Tibial artery (tissue), 4 donors: ENCODE measurements at regions of chr4 and their contacts with region 1.

Region 1: GRCh38 chr4:4985844-4986243 is 33.4 kb downstream of the CYTL1 start:
- DNase-seq: no peak
- H3K4me3 ChIP-seq: no peak overlapping the region
- H3K27ac ChIP-seq: no peak overlapping the region
- H3K4me1 ChIP-seq: peaks cover 0 to 6% (median 3%) of the 10 kb centered on the region in 4 donors
- H3K27me3 ChIP-seq: no peaks in the 10 kb centered on the region
- CTCF ChIP-seq: no peak

Region 2: GRCh38 chr4:4836044-4836566 is 149.7 kb before region 1 on chr4:
- intact Hi-C with region 1: no loop called
- DNase-seq: no peak
- H3K4me3 ChIP-seq: no peak overlapping the region
- H3K27ac ChIP-seq: no peak overlapping the region
- H3K4me1 ChIP-seq: no peaks in the 10 kb centered on the region
- H3K27me3 ChIP-seq: peaks cover 0 to 10% of the 10 kb centered on the region in 2 donors
- CTCF ChIP-seq: no peak

Region 3: DNA sequence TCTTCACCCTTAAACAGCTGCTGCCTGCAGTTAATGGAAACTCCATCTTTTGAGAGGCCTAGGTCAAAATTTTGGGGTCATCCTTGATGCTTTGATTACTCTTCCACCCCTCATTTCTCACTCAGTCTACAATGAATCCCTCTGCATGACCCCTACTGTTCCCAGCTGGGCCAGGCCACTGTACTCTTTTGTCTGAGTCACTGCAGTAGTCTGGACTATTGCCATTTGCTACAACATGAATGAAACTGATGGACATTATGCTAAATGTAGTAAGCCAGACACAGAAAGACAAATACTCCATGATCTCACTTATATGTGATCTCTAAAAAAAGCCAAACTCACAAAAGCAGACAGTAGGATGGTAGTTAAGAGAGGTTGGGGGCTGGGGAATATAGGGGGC is 93.7 kb after region 1 on chr4:
- intact Hi-C with region 1: no loop called
- DNase-seq: no peak
- H3K4me3 ChIP-seq: no peak overlapping the region
- H3K27ac ChIP-seq: no peak overlapping the region
- H3K4me1 ChIP-seq: no peaks in the 10 kb centered on the region
- H3K27me3 ChIP-seq: no peaks in the 10 kb centered on the region
- CTCF ChIP-seq: no peak

Region 4: DNA sequence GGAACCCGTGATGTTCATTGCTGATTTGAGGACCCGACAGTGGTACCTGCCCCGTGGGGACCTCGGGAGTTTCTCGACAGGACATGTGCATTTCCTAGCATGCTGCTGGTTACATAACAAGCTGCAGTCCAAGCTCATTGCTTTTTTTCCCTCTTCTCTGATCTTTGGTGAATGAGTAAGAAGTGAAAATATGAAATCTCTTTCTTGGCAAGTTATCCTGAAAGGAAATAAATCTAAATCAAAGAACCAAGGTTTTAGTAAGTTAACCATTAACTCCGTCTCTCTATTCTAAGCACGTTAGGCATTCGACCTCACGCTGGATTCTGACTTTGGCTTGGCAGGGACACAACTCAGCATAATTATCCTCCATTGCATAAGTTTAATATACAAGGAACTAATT is 152.1 kb after region 1 on chr4:
- intact Hi-C with region 1: loop called (anchors 10 kb)
- DNase-seq: no peak
- H3K4me3 ChIP-seq: no peak overlapping the region
- H3K27ac ChIP-seq: no peak overlapping the region
- H3K4me1 ChIP-seq: no peaks in the 10 kb centered on the region
- H3K27me3 ChIP-seq: no peaks in the 10 kb centered on the region
- CTCF ChIP-seq: no peak